ENCODE measurements at regions of chr11 and their contacts with region 1.

Region 1: DNA sequence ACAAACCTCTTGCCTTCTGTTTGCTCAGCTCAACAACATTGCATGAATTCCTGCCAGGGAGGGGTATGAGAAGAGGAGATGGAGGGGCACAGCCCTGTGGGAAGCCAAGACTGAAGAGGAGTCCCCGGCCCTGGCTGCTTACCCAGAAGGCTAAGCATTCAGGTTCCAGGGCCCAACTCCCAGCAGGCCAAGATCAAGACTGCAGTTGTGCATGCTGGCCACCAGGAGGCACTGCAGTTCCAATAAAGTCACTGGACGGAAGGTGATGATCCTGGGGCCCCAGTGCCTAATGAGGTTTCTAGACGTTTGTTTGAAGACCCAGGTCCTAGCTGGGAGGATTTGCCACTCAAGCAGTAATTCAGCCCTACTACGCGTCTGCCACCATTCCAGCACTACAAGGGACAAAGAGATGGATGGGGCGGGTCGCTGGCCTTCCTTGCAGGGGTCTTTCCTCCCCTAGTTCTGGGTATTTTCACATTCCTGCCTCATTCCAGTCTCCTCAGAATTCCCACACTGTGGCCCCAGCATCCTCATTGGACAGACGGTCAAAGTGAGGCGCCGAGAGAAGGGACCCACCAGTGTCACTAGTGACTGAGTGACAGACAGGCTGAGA is 23.6 kb downstream of the ALX4 start:
- DNase-seq: no peak
- H3K4me3 ChIP-seq: no peak overlapping the region
- CTCF ChIP-seq: peak; percentile 88

Region 2: GRCh38 chr11:44057340-44057739 is 229.0 kb before region 1 on chr11:
- CTCF ChIA-PET with region 1: no interaction called
- POLR2A ChIA-PET with region 1: no interaction called
- DNase-seq: no peak
- H3K4me3 ChIP-seq: no peak overlapping the region
- CTCF ChIP-seq: no peak

Region 3: GRCh38 chr11:44133335-44133946 is 152.9 kb before region 1 on chr11:
- CTCF ChIA-PET with region 1: interaction called, 20 read pairs
- POLR2A ChIA-PET with region 1: no interaction called
- DNase-seq: no peak
- H3K4me3 ChIP-seq: no peak overlapping the region
- CTCF ChIP-seq: peak; percentile 54

Region 4: GRCh38 chr11:44178381-44178780 is 108.0 kb before region 1 on chr11:
- CTCF ChIA-PET with region 1: interaction called, 17 read pairs
- POLR2A ChIA-PET with region 1: no interaction called
- DNase-seq: peak; percentile 59
- H3K4me3 ChIP-seq: no peak overlapping the region
- CTCF ChIP-seq: peak; percentile 40

Region 5: GRCh38 chr11:44269369-44270351 is 16.7 kb before region 1 on chr11:
- CTCF ChIA-PET with region 1: interaction called, 160 read pairs
- POLR2A ChIA-PET with region 1: no interaction called
- DNase-seq: no peak
- H3K4me3 ChIP-seq: peak overlapping the region; percentile 33
- CTCF ChIP-seq: no peak

Region 6: DNA sequence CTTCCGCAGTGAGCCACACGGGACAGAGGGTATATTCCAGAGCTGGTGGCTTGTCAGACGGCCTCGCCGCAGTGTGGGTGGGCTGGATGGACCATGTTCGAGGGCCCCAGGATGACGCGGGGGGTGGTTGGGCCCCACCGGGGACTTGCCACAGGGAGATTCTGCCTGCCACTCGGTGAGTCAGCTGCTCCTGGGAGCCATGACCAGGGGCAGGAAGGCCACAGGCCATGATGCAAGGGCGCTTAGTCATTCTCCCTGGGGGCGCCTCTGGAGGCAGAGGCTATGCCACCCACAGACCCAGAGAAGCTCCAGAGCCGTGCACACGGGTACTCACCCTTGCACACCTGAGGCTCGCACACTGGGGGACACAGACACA is 15.5 kb after region 1 on chr11:
- CTCF ChIA-PET with region 1: interaction called, 44 read pairs
- POLR2A ChIA-PET with region 1: no interaction called
- DNase-seq: no peak
- H3K4me3 ChIP-seq: no peak overlapping the region
- CTCF ChIP-seq: no peak

Region 7: GRCh38 chr11:44309483-44310205 is 23.3 kb after region 1 on chr11 and contains the start of gene ALX4:
- CTCF ChIA-PET with region 1: interaction called, 17 read pairs
- POLR2A ChIA-PET with region 1: no interaction called
- DNase-seq: no peak
- H3K4me3 ChIP-seq: peak within 1 kb of the TSS; percentile 59
- CTCF ChIP-seq: no peak

Region 8: GRCh38 chr11:44483919-44484610 is 197.7 kb after region 1 on chr11:
- CTCF ChIA-PET with region 1: interaction called, 16 read pairs
- POLR2A ChIA-PET with region 1: no interaction called
- DNase-seq: no peak
- H3K4me3 ChIP-seq: no peak overlapping the region
- CTCF ChIP-seq: peak; percentile 52